ENCODE measurements at regions of chr20 and their contacts with region 1.

Region 1: GRCh38 chr20:25065625-25066338 is 7.8 kb upstream of the ACSS1 start:
- DNase-seq: peak; percentile 77
- ATAC-seq: peak; percentile 78
- H3K4me3 Mint-ChIP-seq: no peak overlapping the region
- H3K27ac Mint-ChIP-seq: no peak overlapping the region
- H3K4me1 Mint-ChIP-seq: peaks cover 8% of the 10 kb centered on the region
- H3K27me3 Mint-ChIP-seq: peaks cover 43% of the 10 kb centered on the region

Region 2: DNA sequence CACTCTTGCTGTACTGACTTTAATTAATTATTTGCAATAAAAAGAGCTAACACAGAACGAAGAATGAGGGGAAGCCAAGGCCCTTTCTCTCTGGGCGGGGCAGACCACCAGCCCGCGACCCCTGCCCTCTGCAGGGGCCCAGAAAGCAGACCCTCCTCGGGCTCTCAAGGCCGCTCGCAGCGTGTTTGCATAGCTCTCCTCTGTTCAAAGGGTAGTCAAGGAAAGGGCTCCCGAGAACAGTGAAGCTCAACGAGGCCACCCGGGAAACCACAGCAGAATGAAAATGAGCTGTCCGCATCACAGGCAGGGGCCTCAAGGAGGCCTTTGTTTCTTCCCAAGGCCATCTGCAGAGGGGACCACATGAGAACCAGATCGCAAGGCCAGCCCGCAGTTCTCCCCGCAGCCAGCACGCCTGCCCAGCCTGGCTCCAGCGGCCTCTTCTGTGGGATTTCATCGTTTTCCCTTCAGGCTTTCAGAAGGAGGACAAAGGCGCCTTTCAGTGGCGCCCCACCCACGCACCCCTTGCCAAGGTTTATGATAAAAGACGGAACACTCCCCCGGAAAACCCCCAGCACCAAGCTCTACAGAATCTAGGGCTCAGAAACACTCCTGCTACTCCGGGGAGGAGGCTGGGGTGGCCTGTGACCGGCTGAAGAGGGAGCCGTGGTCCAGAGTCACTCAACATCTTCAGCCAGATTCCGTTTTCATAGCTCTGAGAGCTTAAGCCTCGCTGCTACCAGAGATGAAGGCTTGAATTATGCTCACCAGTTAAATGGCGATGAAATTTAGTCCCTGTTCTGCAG is 33.1 kb before region 1 on chr20:
- CTCF ChIA-PET with region 1: interaction called, 17 read pairs
- POLR2A ChIA-PET with region 1: no interaction called
- DNase-seq: no peak
- ATAC-seq: no peak
- H3K4me3 Mint-ChIP-seq: no peak overlapping the region
- H3K27ac Mint-ChIP-seq: no peak overlapping the region
- H3K4me1 Mint-ChIP-seq: peaks cover 30% of the 10 kb centered on the region
- H3K27me3 Mint-ChIP-seq: no peaks in the 10 kb centered on the region

Region 3: DNA sequence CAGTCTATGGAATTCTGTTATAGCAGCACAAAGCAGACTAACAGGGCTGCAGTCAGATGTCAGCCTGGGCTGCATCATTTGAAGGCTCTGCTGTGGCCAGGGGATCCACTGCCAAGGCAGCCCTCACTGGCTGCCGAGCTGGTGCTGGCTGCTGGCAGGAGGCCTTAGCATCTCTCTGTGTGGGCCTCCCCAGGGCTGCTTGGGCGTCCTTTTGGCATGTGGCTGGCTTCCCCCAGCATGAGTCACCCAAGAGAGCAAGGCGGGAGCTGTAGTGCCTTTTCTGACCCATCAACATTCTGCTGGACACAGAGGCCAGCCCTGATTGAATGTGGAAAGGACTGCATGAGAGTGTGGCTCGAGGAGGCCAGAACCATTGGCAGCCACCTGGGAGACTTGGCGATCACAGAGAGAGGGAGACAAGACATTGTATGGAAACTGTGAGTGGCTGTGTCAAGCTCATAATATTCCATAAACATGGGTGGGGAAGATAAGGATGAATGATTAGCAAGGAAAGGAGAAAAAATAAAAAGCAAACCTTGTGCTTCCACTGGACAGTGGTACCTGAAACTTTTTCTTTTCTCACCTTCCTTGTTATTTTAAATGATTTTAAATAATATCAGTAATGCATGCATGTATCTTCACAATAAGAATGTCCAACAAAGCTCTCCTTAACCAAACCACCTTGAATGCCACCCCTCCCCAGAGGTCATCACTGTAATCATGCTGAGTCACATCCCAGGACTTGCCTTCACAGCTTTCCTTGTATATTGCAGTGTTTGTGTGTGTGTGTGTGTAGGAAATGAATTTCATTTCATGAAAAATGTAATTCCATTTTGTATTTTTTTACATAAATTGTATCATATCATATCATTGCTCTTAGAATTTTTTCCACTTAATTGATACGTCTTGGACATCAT is 71.1 kb after region 1 on chr20:
- CTCF ChIA-PET with region 1: no interaction called
- POLR2A ChIA-PET with region 1: no interaction called
- DNase-seq: no peak
- ATAC-seq: no peak
- H3K4me3 Mint-ChIP-seq: no peak overlapping the region
- H3K27ac Mint-ChIP-seq: no peak overlapping the region
- H3K4me1 Mint-ChIP-seq: no peaks in the 10 kb centered on the region
- H3K27me3 Mint-ChIP-seq: peaks cover 2% of the 10 kb centered on the region

Region 4: GRCh38 chr20:25178563-25179438 is 113.0 kb after region 1 on chr20:
- CTCF ChIA-PET with region 1: interaction called, 14 read pairs
- POLR2A ChIA-PET with region 1: no interaction called
- DNase-seq: peak; percentile 38
- ATAC-seq: no peak
- H3K4me3 Mint-ChIP-seq: no peak overlapping the region
- H3K27ac Mint-ChIP-seq: no peak overlapping the region
- H3K4me1 Mint-ChIP-seq: no peaks in the 10 kb centered on the region
- H3K27me3 Mint-ChIP-seq: peaks cover 13% of the 10 kb centered on the region

Measured in activated CD8-positive, alpha-beta T cell treated with anti-CD3 and anti-CD28 coated beads, Interleukin-2, amount 10 ng/mL, durations not matched to agents 7 days and 5 days (primary cell).